Heart right ventricle (tissue), 16 donors: ENCODE measurements at regions of chr5 and their contacts with region 1.

Region 1: DNA sequence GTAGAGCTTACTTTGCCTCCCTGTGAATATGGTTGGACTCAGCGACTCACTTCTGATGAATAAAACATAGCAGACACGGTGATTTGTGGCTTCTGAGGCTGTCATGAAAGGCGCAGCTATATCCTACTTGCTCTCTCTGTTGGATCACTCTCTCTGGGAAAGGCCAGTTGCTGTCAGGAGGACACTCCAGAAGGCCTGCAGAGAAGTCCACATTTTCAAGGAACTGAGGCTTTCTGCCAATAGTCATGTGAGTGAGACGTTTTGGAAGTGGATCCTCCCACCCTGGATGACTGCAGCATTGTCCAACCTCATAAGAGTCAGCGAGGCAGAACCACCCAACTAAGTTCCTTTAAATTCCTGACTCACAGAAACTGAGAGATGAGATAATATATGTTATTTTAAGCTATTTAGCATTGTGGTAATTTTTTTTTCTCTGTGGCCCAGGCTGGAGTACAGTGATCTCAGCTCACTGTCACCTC is 156.0 kb upstream of the MAST4 start:
- DNase-seq: peak in 1 of 2 donors; percentile 68
- ATAC-seq: peak; percentile 64 to 92 (median 88)
- H3K4me3 ChIP-seq: peak overlapping the region in 9 of 10 donors; percentile 23 to 55 (median 50)
- H3K27ac ChIP-seq: peak overlapping the region in 9 of 10 donors; percentile 35 to 83 (median 68)
- H3K4me1 ChIP-seq: peaks cover 0 to 26% (median 11%) of the 10 kb centered on the region in 9 donors
- H3K27me3 ChIP-seq: no peaks in the 10 kb centered on the region
- CTCF ChIP-seq: no peak

Region 2: GRCh38 chr5:66361070-66361469 is 79.2 kb before region 1 on chr5:
- intact Hi-C with region 1: loop called in 2 of 10 experiments (anchors 5 to 10 kb)
- DNase-seq: no peak
- ATAC-seq: peak in 4 of 8 donors; percentile 26 to 49 (median 42)
- H3K4me3 ChIP-seq: no peak overlapping the region
- H3K27ac ChIP-seq: peak overlapping the region in 7 of 10 donors; percentile 56 to 93 (median 84)
- H3K4me1 ChIP-seq: peaks cover 0 to 67% (median 14%) of the 10 kb centered on the region in 9 donors
- H3K27me3 ChIP-seq: no peaks in the 10 kb centered on the region
- CTCF ChIP-seq: no peak

Region 3: GRCh38 chr5:66367814-66368541 is 72.3 kb before region 1 on chr5:
- intact Hi-C with region 1: loop called in 2 of 10 experiments (anchors 5 to 10 kb)
- DNase-seq: peak in 1 of 2 donors; percentile 29
- ATAC-seq: peak; percentile 68 to 93 (median 88)
- H3K4me3 ChIP-seq: no peak overlapping the region
- H3K27ac ChIP-seq: peak overlapping the region; percentile 70 to 93 (median 84)
- H3K4me1 ChIP-seq: peaks cover 5 to 88% (median 17%) of the 10 kb centered on the region in 9 donors
- H3K27me3 ChIP-seq: no peaks in the 10 kb centered on the region
- CTCF ChIP-seq: no peak